Heart right ventricle (tissue), 16 donors: ENCODE measurements at regions of chr5 and their contacts with region 1.

Region 1: DNA sequence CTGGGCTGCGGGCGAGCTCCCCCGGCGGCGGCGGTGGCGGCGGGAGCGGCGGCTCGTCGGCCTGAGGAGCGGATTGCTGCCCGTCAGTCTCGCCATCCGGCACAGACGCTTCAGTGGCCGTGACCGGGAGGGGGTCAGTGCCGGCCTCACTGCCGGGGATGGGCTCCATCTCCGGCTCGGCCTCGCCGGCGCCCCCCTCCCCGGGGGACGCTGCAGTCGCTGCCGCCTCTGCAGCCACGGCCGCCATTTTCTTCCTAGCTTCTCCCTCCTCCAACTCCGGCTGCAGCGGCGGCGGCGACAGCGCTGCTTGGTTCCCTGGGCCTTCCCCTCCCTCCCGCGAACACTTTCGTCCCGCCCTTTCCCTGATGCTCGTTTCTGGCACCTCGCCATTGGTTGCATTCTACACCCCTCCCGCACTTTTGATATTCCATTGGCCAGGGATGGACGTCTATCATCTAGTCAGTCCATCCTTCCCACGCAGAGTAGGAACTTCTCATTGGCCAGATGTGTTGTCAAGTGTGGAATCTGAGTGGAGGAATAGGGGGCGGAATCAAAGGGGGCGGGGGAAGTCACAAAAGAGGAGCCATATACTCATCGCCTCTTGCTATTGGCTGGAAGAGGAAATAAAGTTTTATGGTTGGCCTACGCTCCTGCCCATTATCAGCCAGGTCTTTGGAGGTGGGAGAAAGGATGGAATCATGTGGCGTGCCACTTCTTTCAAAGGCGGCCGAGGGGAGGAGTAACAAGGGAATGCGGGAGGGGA is at the start of gene PWWP2A:
- DNase-seq: peak; percentile 97 to 100
- ATAC-seq: peak; percentile 96 to 99 (median 98)
- H3K4me3 ChIP-seq: peak within 1 kb of the TSS; percentile 65 to 100 (median 97)
- H3K27ac ChIP-seq: peak within 1 kb of the TSS; percentile 85 to 99 (median 98)
- H3K4me1 ChIP-seq: peaks cover 0 to 23% (median 15%) of the 10 kb centered on the region in 9 donors
- H3K27me3 ChIP-seq: no peaks in the 10 kb centered on the region
- CTCF ChIP-seq: peak in 4 of 9 donors; percentile 35 to 45 (median 38)
- total RNA-seq, gene PWWP2A: 8.2 to 14.7 (median 12.4) TPM

Region 2: GRCh38 chr5:160039810-160040470 is 79.4 kb before region 1 on chr5:
- intact Hi-C with region 1: loop called in 1 of 10 experiments (anchors 5 kb)
- DNase-seq: no peak
- ATAC-seq: no peak
- H3K4me3 ChIP-seq: no peak overlapping the region
- H3K27ac ChIP-seq: no peak overlapping the region
- H3K4me1 ChIP-seq: peaks cover 0 to 27% (median 13%) of the 10 kb centered on the region in 9 donors
- H3K27me3 ChIP-seq: no peaks in the 10 kb centered on the region
- CTCF ChIP-seq: no peak

Region 3: GRCh38 chr5:160054831-160055230 is 64.5 kb before region 1 on chr5:
- intact Hi-C with region 1: no loop called
- DNase-seq: no peak
- ATAC-seq: no peak
- H3K4me3 ChIP-seq: no peak overlapping the region
- H3K27ac ChIP-seq: no peak overlapping the region
- H3K4me1 ChIP-seq: no peaks in the 10 kb centered on the region
- H3K27me3 ChIP-seq: no peaks in the 10 kb centered on the region
- CTCF ChIP-seq: no peak

Region 4: DNA sequence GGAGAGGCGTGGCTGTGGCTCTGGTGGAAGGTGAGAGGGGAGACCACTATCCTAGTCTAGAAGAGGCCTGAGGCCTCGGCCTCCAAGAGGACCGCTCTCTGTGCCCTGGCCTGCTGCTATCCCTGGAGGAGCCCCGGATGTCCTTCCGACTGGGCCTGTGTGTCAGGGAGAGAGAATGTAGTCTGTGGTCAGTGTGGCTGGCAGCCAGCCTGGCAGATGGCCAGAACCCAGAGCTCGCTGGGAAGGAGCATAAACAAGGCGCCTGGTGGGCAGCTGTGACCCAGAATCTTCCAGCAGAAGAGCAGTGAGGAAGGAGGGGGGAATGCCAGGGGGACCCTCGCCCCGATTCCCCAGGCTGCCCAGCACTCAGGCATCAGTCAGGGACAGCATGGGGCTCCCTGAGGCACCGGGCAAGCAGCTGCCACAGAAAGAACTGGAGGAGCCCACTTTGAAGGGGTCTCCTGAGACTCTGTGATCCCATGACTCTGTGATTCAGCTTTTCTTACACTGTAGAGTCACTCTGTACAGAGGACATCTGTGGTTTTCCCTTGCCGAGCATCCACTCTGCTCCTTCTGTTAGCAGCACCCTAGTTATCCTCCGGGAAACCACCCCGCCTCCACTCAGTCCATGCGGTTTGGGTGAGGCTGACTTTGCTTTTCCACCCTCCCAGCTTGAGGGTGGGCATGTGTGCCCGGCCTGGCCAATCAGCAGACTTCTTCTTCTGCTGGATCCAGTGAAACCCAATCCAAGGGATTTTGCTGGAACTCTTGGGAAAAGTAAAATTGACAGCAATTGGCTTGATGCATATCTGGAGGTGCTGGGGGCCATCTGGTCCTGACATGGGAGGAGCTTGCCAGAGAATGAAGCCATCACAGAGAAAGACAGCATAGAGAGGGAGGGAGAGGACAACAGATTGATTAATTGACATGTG is 46.1 kb after region 1 on chr5:
- intact Hi-C with region 1: loop called in 1 of 10 experiments (anchors 5 kb)
- DNase-seq: peak; percentile 88 to 90
- ATAC-seq: peak; percentile 86 to 93 (median 89)
- H3K4me3 ChIP-seq: peak overlapping the region in 1 of 10 donors; percentile 9
- H3K27ac ChIP-seq: peak overlapping the region; percentile 46 to 87 (median 83)
- H3K4me1 ChIP-seq: peaks cover 8 to 44% (median 20%) of the 10 kb centered on the region in 9 donors
- H3K27me3 ChIP-seq: no peaks in the 10 kb centered on the region
- CTCF ChIP-seq: no peak